CD14-positive monocyte (primary cell): ENCODE measurements at regions of chr17 and their contacts with region 1.

Region 1: DNA sequence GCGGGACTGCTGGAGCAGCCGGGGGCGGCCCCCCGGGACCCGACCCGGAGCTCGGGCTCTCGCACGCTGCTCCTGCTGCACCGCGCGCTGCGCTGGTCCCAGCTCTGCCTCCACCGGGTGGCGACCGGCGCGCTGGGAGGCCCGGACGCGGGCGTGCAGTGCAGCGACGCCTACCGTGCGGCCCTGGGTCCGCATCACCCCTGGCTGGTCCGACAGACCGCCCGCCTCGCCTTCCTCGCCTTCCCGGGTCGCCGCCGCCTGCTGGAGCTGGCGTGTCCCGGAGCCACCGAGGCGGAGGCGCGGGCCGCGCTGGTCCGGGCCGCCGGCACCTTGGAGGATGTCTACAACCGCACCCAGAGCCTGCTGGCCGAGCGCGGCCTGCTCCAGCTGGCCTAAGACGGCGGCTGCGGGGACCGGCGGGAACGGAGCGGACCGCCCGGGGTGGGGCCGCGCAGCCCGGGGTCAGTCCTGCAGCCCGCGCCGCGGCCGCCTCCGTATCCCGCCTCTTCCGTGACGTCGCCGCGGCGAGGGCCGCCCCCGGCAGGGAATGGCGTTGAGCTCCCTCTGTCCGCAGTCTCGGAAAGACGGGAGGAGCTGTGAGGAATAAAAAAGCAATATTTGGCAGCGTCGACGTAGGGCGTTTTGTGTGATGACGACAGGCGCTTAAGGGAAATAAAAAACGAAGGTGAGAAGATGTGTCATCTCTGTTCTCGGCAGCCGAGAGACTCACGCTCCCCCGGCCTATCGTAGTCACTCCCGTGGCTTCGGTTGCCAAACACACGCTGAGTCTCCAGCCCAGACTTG is 1.3 kb downstream of the GLTPD2 start:
- DNase-seq: peak; percentile 90 to 94 (median 92)
- H3K4me3 ChIP-seq: peak overlapping the region; percentile 45 to 76 (median 49)
- H3K4me3 Mint-ChIP-seq: peak overlapping the region; percentile 85 to 91
- H3K27ac ChIP-seq: peak overlapping the region; percentile 67 to 91
- H3K27ac Mint-ChIP-seq: peak overlapping the region; percentile 89 to 98 (median 96)
- H3K4me1 ChIP-seq: peaks cover 39 to 49% of the 10 kb centered on the region in 2 donors
- H3K4me1 Mint-ChIP-seq: peaks cover 44% of the 10 kb centered on the region
- H3K27me3 ChIP-seq: peaks cover 26 to 52% of the 10 kb centered on the region in 2 donors
- H3K27me3 Mint-ChIP-seq: peaks cover 51 to 70% (median 65%) of the 10 kb centered on the region in 3 donors
- CTCF ChIP-seq: peak; percentile 86

Region 2: GRCh38 chr17:4709794-4710692 is 80.1 kb before region 1 on chr17 and contains the start of gene ARRB2:
- intact Hi-C with region 1: loop called (anchors 5 kb)
- DNase-seq: peak; percentile 97 to 99 (median 98)
- H3K4me3 ChIP-seq: peak within 1 kb of the TSS; percentile 74 to 99 (median 93)
- H3K4me3 Mint-ChIP-seq: peak within 1 kb of the TSS; percentile 97 to 98
- H3K27ac ChIP-seq: peak within 1 kb of the TSS; percentile 93 to 98
- H3K27ac Mint-ChIP-seq: peak within 1 kb of the TSS; percentile 97 to 99 (median 99)
- H3K4me1 ChIP-seq: peaks cover 44 to 50% of the 10 kb centered on the region in 2 donors
- H3K4me1 Mint-ChIP-seq: peaks cover 46% of the 10 kb centered on the region
- H3K27me3 ChIP-seq: no peaks in the 10 kb centered on the region
- H3K27me3 Mint-ChIP-seq: peaks cover 0 to 4% (median 0%) of the 10 kb centered on the region in 3 donors
- CTCF ChIP-seq: peak; percentile 82
- polyA plus RNA-seq, gene ARRB2: 134 to 760 (median 150) TPM

Region 3: GRCh38 chr17:4739122-4740024 is 50.7 kb before region 1 on chr17 and contains the starts of genes CXCL16 and ZMYND15:
- intact Hi-C with region 1: loop called (anchors 2 to 5 kb)
- DNase-seq: peak; percentile 70 to 76 (median 70)
- H3K4me3 ChIP-seq: peak within 1 kb of the TSS; percentile 46 to 78 (median 76)
- H3K4me3 Mint-ChIP-seq: peak within 1 kb of the TSS; percentile 95 to 99
- H3K27ac ChIP-seq: peak within 1 kb of the TSS; percentile 57 to 79
- H3K27ac Mint-ChIP-seq: peak within 1 kb of the TSS; percentile 68 to 96 (median 89)
- H3K4me1 ChIP-seq: peaks cover 46 to 56% of the 10 kb centered on the region in 2 donors
- H3K4me1 Mint-ChIP-seq: peaks cover 47% of the 10 kb centered on the region
- H3K27me3 ChIP-seq: peaks cover 3 to 52% of the 10 kb centered on the region in 2 donors
- H3K27me3 Mint-ChIP-seq: peaks cover 41 to 60% (median 50%) of the 10 kb centered on the region in 3 donors
- CTCF ChIP-seq: no peak
- polyA plus RNA-seq, gene CXCL16: 68.1 to 204 (median 103) TPM
- polyA plus RNA-seq, gene ZMYND15: 0.97 to 13.6 (median 1.2) TPM

Region 4: DNA sequence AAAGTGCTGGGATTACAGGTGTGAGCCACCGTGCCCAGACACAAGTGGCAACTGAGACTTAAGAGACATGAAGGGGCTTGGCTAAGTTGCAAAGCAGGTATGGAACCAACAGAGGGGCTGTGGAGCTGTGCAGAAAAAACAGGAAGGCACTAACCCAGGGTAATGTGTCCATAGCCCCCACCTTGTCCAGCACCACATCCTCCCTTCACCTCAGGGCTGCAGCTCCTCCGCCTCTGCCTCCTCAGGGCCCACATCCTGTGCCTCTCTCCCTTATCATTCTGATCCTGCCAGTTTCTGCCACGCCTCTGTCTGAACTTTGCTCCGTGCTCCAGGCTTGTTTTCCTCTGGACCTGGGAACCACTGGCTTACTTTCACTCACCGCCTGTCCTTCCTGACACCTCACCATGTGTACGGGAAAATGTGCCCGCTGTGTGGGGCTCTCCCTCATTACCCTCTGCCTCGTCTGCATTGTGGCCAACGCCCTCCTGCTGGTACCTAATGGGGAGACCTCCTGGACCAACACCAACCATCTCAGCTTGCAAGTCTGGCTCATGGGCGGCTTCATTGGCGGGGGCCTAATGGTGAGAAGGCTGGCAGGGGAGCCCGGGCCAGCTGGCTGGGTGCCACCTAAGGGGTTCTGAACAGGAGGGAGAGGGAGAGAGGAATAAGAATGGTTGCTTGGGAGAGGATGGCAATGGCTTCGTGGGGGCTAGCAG is 18.4 kb before region 1 on chr17 and contains the start of gene TM4SF5:
- intact Hi-C with region 1: loop called (anchors 2 kb)
- DNase-seq: no peak
- H3K4me3 ChIP-seq: no peak within 1 kb of the TSS
- H3K4me3 Mint-ChIP-seq: peak within 1 kb of the TSS in 1 of 2 donors; percentile 42
- H3K27ac ChIP-seq: peak within 1 kb of the TSS; percentile 51 to 98
- H3K27ac Mint-ChIP-seq: peak within 1 kb of the TSS; percentile 86 to 97 (median 94)
- H3K4me1 ChIP-seq: peaks cover 46 to 52% of the 10 kb centered on the region in 2 donors
- H3K4me1 Mint-ChIP-seq: peaks cover 45% of the 10 kb centered on the region
- H3K27me3 ChIP-seq: no peaks in the 10 kb centered on the region
- H3K27me3 Mint-ChIP-seq: peaks cover 4 to 31% (median 25%) of the 10 kb centered on the region in 3 donors
- CTCF ChIP-seq: no peak
- polyA plus RNA-seq, gene TM4SF5: not detected

Region 5: DNA sequence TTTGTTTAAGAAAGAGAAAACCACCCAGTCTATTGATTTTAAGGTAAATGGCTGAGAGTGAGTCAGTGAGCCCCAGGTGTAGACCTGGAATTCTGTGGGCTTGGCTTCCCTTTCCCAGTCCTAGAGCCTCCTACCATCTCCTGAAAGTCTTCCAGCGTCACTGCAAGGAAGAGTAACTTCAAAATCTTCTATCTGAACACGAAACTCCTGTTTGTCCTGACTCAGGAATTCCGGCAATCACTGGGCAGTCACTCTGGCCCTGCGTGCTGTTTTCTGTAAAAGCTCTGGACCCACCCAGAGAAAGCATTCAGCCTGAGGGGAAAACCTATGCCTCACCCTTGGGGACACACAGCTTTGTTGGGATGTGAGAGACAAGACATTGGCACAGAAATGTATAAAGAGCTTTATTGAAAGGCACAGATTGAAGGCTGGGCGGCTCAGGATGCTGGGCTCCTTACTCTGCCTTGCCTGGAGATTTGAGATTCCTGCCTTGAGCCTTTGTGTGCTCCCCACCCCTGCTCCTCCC is 59.0 kb after region 1 on chr17:
- intact Hi-C with region 1: loop called in 1 of 2 experiments (anchors 10 kb)
- DNase-seq: no peak
- H3K4me3 ChIP-seq: no peak overlapping the region
- H3K4me3 Mint-ChIP-seq: no peak overlapping the region
- H3K27ac ChIP-seq: no peak overlapping the region
- H3K27ac Mint-ChIP-seq: peak overlapping the region in 1 of 7 donors; percentile 58
- H3K4me1 ChIP-seq: peaks cover 57 to 60% of the 10 kb centered on the region in 2 donors
- H3K4me1 Mint-ChIP-seq: peaks cover 75% of the 10 kb centered on the region
- H3K27me3 ChIP-seq: no peaks in the 10 kb centered on the region
- H3K27me3 Mint-ChIP-seq: peaks cover 0 to 6% (median 5%) of the 10 kb centered on the region in 3 donors
- CTCF ChIP-seq: no peak

Region 6: DNA sequence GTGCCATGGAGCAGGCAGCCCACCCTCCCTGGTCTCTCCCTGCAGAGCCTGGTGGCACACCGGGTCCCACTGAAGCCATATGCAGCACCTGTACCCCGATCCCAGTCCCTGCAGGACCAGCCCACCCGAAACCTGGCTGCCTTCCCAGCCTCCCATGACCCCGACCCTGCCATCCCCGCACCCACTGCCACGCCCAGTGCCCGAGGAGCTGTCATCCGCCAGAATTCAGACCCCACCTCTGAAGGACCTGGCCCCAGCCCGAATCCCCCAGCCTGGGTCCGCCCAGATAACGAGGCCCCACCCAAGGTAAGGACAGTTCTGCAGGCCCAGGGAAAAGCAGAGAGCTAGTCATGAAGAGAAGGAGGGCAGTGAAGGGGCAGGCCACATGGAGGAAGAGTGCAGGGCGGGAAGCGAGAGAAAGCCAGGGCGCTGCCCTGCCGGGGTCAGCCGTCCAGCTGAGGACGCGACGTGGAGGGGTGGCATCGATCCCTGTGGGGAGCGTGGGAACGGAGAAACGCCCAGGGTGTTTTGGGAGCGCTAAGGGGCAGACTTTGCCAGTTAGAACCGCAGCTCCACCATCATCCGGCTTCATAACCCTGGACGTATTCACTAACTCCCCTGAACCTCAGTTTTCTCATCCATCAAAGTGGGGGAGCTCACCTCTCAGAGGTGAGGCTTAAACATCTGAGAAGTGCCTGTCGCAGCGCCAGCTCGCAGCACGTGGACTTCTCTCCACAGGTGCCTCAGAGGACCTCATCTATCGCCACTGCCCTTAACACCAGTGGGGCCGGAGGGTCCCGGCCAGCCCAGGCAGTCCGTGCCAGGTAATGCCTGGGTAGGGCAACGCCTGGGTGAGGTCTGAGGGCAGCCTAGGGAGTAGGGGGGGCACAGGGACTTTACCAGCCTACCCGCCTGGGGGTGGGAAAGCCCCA is 101.6 kb after region 1 on chr17:
- intact Hi-C with region 1: loop called in 1 of 2 experiments (anchors 5 kb)
- DNase-seq: peak in 1 of 3 donors; percentile 3
- H3K4me3 ChIP-seq: no peak overlapping the region
- H3K4me3 Mint-ChIP-seq: no peak overlapping the region
- H3K27ac ChIP-seq: no peak overlapping the region
- H3K27ac Mint-ChIP-seq: peak overlapping the region in 1 of 7 donors; percentile 66
- H3K4me1 ChIP-seq: no peaks in the 10 kb centered on the region
- H3K4me1 Mint-ChIP-seq: peaks cover 2% of the 10 kb centered on the region
- H3K27me3 ChIP-seq: no peaks in the 10 kb centered on the region
- H3K27me3 Mint-ChIP-seq: peaks cover 0 to 3% (median 0%) of the 10 kb centered on the region in 3 donors
- CTCF ChIP-seq: no peak

Region 7: DNA sequence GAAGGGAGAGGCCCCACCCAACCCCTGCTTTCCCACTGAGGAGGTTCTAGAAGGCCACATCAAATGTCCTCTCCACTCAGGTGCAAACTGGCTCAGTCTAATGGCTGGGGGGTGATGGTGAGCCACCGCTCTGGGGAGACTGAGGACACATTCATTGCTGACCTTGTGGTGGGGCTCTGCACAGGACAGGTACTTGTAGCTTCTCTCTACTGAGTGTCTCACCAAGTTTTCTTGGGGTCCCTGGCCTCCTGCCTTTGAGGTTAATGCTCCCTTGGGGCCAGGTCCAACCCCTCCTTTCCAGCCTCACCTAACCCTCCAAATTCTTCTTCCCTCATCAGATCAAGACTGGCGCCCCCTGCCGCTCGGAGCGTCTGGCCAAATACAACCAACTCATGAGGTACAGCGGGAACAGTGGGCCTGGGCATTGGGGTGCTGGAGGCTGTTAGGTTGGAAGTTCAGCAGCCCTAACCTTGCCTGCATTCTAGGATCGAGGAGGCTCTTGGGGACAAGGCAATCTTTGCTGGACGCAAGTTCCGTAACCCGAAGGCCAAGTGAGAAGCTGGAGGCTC is 166.5 kb after region 1 on chr17:
- intact Hi-C with region 1: no loop called
- DNase-seq: peak in 2 of 3 donors; percentile 33 to 43
- H3K4me3 ChIP-seq: no peak overlapping the region
- H3K4me3 Mint-ChIP-seq: no peak overlapping the region
- H3K27ac ChIP-seq: no peak overlapping the region
- H3K27ac Mint-ChIP-seq: no peak overlapping the region
- H3K4me1 ChIP-seq: peaks cover 0 to under 1% of the 10 kb centered on the region in 2 donors
- H3K4me1 Mint-ChIP-seq: peaks cover 5% of the 10 kb centered on the region
- H3K27me3 ChIP-seq: no peaks in the 10 kb centered on the region
- H3K27me3 Mint-ChIP-seq: no peaks in the 10 kb centered on the region
- CTCF ChIP-seq: peak; percentile 34